ENCODE measurements at regions of chr11 and their contacts with region 1.

Region 1: GRCh38 chr11:125345421-125346178 is 150.5 kb downstream of the FEZ1 start:
- DNase-seq: peak in 1 of 2 experiments; percentile 72
- H3K4me3 ChIP-seq: no peak overlapping the region
- H3K4me3 Mint-ChIP-seq: no peak overlapping the region
- H3K27ac Mint-ChIP-seq: no peak overlapping the region
- H3K4me1 ChIP-seq: no peaks in the 10 kb centered on the region
- H3K4me1 Mint-ChIP-seq: peaks cover 7% of the 10 kb centered on the region
- H3K27me3 ChIP-seq: peaks cover 3% of the 10 kb centered on the region; the same call in 1 of the 2 replicates
- H3K27me3 Mint-ChIP-seq: peaks cover 14% of the 10 kb centered on the region
- CTCF ChIP-seq: peak; percentile 90

Region 2: GRCh38 chr11:125123947-125124617 is 221.5 kb before region 1 on chr11:
- CTCF ChIA-PET with region 1: interaction called, 17 read pairs
- POLR2A ChIA-PET with region 1: no interaction called
- intact Hi-C with region 1: no loop called
- DNase-seq: peak; percentile 74 to 77
- H3K4me3 ChIP-seq: peak overlapping the region; percentile 5
- H3K4me3 Mint-ChIP-seq: peak overlapping the region; percentile 55
- H3K27ac Mint-ChIP-seq: peak overlapping the region; percentile 76
- H3K4me1 ChIP-seq: peaks cover 28% of the 10 kb centered on the region
- H3K4me1 Mint-ChIP-seq: peaks cover 32% of the 10 kb centered on the region
- H3K27me3 ChIP-seq: no peaks in the 10 kb centered on the region
- H3K27me3 Mint-ChIP-seq: peaks cover 5% of the 10 kb centered on the region
- CTCF ChIP-seq: peak; percentile 67 to 80

Region 3: GRCh38 chr11:125141686-125142535 is 203.7 kb before region 1 on chr11:
- CTCF ChIA-PET with region 1: interaction called, 12 read pairs
- POLR2A ChIA-PET with region 1: no interaction called
- intact Hi-C with region 1: no loop called
- DNase-seq: peak; percentile 56 to 82
- H3K4me3 ChIP-seq: no peak overlapping the region
- H3K4me3 Mint-ChIP-seq: no peak overlapping the region
- H3K27ac Mint-ChIP-seq: no peak overlapping the region
- H3K4me1 ChIP-seq: 0 out of 2 replicates have a peak, but pooled peaks cover 5% of the 10 kb centered on the region
- H3K4me1 Mint-ChIP-seq: no peaks in the 10 kb centered on the region
- H3K27me3 ChIP-seq: no peaks in the 10 kb centered on the region
- H3K27me3 Mint-ChIP-seq: peaks cover 7% of the 10 kb centered on the region
- CTCF ChIP-seq: peak; percentile 98 to 100

Region 4: GRCh38 chr11:125164422-125165110 is 181.0 kb before region 1 on chr11 and contains the start of gene PKNOX2:
- CTCF ChIA-PET with region 1: interaction called, 6 read pairs
- POLR2A ChIA-PET with region 1: no interaction called
- intact Hi-C with region 1: loop called (anchors 2 kb)
- DNase-seq: peak; percentile 71 to 89
- H3K4me3 ChIP-seq: peak within 1 kb of the TSS; percentile 65
- H3K4me3 Mint-ChIP-seq: peak within 1 kb of the TSS; percentile 76
- H3K27ac Mint-ChIP-seq: no peak within 1 kb of the TSS
- H3K4me1 ChIP-seq: peaks cover 5% of the 10 kb centered on the region
- H3K4me1 Mint-ChIP-seq: peaks cover 8% of the 10 kb centered on the region
- H3K27me3 ChIP-seq: peaks cover 11% of the 10 kb centered on the region
- H3K27me3 Mint-ChIP-seq: peaks cover 27% of the 10 kb centered on the region
- CTCF ChIP-seq: peak; percentile 67 to 95
- total RNA-seq, gene PKNOX2: not detected in 2 replicates

Region 5: DNA sequence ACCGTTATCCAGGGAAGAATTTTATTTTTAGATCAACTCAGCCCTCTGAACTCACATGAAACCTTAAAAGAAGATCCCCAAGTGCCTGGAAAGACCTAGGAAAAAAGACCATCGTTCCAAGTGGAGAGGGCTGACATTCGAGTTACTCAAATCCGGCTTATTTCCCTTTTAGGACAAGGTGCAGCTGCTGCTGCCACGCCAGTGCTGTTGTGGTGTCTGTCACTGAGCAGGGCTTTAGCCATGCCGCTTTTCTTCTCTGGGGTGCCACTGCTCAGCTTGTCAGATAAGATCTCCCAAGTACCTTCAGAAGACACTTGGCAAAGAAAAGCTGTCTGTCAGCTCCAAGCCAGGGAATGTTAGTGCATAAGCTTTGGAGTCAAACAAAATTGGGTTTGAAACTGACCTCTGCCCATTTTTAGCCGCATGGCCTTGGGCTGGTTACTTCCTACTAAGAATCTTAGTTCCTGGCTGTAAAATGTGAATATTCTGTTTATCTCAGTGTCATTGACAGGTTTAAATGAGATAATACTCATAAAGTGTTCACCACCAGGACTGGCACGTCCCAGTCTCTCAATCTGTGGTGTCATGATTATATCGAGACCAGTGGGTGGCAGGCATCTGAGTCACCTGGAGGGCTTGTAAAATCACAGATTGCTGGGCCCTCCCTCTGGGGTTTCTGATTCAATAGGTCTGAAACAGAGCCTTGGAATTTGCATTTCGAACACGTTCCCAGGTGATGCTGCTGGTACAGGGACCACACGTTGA is 63.6 kb before region 1 on chr11:
- CTCF ChIA-PET with region 1: interaction called, 5 read pairs
- POLR2A ChIA-PET with region 1: no interaction called
- intact Hi-C with region 1: loop called (anchors 5 kb)
- DNase-seq: no peak
- H3K4me3 ChIP-seq: no peak overlapping the region
- H3K4me3 Mint-ChIP-seq: no peak overlapping the region
- H3K27ac Mint-ChIP-seq: no peak overlapping the region
- H3K4me1 ChIP-seq: no peaks in the 10 kb centered on the region
- H3K4me1 Mint-ChIP-seq: no peaks in the 10 kb centered on the region
- H3K27me3 ChIP-seq: peaks cover 1% of the 10 kb centered on the region; the same call in 1 of the 2 replicates
- H3K27me3 Mint-ChIP-seq: peaks cover 16% of the 10 kb centered on the region
- CTCF ChIP-seq: no peak

Region 6: DNA sequence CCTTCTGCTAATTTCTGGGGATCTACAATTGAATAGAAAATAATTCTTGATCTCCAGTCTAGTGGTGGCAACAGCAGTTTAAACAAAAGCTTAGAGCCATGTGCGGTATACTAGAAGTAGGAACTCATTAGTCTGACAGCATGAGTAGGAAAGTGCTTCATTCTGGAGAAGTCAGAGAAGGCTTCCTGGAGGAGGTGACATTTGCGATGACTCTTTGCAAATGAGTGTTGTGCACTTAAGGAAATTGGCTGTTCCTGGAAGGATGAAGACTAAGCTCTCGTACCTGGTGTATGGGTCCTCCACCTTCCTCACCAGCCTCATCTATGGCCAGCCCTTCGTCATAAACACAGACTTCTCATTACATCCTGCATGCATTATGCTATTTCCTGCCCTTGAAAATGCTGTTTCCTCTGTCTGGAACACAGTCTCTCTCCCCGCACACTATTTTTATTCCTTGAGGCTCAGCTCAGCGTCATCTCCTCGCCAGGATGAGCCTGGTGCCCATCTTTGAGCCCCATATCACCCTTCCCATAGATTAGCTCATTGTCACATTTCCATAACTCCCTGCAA is 48.2 kb before region 1 on chr11:
- CTCF ChIA-PET with region 1: interaction called, 13 read pairs
- POLR2A ChIA-PET with region 1: no interaction called
- intact Hi-C with region 1: no loop called
- DNase-seq: no peak
- H3K4me3 ChIP-seq: no peak overlapping the region
- H3K4me3 Mint-ChIP-seq: no peak overlapping the region
- H3K27ac Mint-ChIP-seq: no peak overlapping the region
- H3K4me1 ChIP-seq: no peaks in the 10 kb centered on the region
- H3K4me1 Mint-ChIP-seq: no peaks in the 10 kb centered on the region
- H3K27me3 ChIP-seq: peaks cover 4% of the 10 kb centered on the region
- H3K27me3 Mint-ChIP-seq: peaks cover 34% of the 10 kb centered on the region
- CTCF ChIP-seq: no peak

Region 7: DNA sequence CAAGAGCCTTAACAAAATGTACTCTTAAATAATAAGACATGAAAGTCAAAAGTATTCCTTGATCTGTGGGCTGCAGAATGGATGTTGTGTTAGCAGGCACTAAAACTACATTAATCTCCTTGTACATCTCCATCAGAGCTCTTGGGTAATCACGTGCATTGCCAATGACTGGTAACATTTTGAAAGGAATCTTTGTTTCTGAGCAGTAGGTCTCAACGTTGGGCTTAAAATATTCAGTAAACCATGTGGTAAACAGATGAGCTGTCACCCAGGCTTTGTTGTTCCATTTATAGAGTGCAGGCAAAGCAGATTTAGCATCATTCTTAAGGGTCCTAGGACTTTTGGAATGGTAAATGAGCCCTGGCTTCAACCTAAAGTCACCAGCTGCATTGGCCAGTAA is 28.2 kb before region 1 on chr11:
- CTCF ChIA-PET with region 1: no interaction called
- POLR2A ChIA-PET with region 1: no interaction called
- intact Hi-C with region 1: no loop called
- DNase-seq: no peak
- H3K4me3 ChIP-seq: no peak overlapping the region
- H3K4me3 Mint-ChIP-seq: no peak overlapping the region
- H3K27ac Mint-ChIP-seq: no peak overlapping the region
- H3K4me1 ChIP-seq: no peaks in the 10 kb centered on the region
- H3K4me1 Mint-ChIP-seq: no peaks in the 10 kb centered on the region
- H3K27me3 ChIP-seq: peaks cover 5% of the 10 kb centered on the region
- H3K27me3 Mint-ChIP-seq: peaks cover 25% of the 10 kb centered on the region
- CTCF ChIP-seq: no peak

Region 8: DNA sequence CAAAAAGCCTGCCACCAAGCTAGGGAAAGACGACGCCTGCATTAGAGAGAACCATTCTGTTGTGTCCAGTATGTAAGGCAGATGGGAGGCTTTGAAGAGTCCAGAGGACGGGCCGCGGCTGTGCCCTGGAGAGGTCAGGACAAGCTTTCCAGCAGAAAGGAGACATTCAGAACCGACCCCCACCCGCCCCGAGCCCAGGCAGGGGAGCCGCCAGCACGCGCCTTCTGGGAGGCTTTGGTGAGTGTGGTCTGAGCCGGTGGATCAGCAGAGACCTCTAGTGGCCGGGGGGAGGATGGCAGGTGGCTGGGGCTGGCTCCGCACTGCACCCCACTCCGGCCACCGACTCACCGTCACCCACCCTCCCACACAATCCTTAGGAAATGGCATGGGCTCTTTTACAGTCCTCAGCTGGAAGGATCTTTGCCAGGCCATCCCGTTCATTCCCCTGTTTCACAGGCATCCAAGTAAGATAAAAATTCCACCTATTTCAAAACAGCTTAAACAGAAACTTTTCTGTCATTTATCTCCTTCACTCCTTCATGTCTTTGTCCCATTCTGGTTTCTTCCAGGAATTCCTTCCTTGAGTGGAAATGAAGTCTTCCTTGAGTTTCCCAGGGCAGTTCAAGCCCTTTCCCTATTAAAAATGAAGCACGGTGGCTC is 59.3 kb after region 1 on chr11:
- CTCF ChIA-PET with region 1: interaction called, 4 read pairs
- POLR2A ChIA-PET with region 1: no interaction called
- intact Hi-C with region 1: loop called (anchors 2 kb)
- DNase-seq: peak; percentile 74 to 90
- H3K4me3 ChIP-seq: no peak overlapping the region
- H3K4me3 Mint-ChIP-seq: no peak overlapping the region
- H3K27ac Mint-ChIP-seq: no peak overlapping the region
- H3K4me1 ChIP-seq: no peaks in the 10 kb centered on the region
- H3K4me1 Mint-ChIP-seq: no peaks in the 10 kb centered on the region
- H3K27me3 ChIP-seq: peaks cover 5% of the 10 kb centered on the region
- H3K27me3 Mint-ChIP-seq: peaks cover 48% of the 10 kb centered on the region
- CTCF ChIP-seq: peak; percentile 99